Activated naive CD4-positive, alpha-beta T cell treated with anti-CD3 and anti-CD28 coated beads, Interleukin-2, amount 10 ng/mL, durations not matched to agents 7 days and 5 days (primary cell): ENCODE measurements at regions of chr1 and their contacts with region 1.

Region 1: DNA sequence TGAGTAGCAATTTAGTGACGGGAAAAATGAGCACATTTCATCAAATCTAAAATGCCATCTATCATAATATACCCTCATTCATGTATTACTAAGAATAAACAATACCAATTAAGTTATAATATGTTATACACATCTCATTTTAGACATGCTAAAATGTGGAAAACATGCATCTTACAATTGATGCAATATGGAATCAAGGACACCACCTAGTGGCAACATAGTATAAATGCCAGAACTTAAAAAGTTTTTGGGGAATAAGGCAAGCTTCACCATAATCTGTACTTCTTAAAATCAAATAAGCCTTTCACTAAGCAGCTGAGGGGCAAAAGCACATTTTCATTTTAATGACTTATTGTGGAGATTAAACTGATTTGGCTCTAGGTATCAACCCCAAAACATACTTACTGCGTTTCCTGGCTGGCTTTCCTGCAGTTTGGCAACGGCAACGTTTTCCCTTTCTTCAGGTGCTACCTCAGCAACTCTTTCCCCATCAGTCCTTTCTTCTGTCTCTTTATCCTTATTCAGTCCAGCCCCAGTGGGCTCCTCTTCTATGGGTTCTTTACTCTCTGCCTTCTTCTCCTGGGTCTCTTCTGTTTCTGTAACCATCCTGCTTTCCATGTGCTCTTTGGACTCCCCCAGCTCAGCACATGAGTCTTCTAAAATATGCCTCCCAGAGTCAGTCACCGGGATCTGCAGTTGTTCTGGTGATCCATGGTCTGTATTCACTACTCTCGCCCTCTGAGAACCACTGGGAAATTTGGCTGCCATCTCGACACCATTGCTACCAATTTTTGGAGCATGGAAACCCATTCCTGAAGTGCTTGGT is 11.4 kb downstream of the SDE2 start:
- DNase-seq: no peak
- H3K4me3 Mint-ChIP-seq: no peak overlapping the region
- H3K27ac Mint-ChIP-seq: no peak overlapping the region
- H3K4me1 Mint-ChIP-seq: peaks cover 22% of the 10 kb centered on the region
- H3K27me3 Mint-ChIP-seq: no peaks in the 10 kb centered on the region

Region 2: GRCh38 chr1:225845571-225846259 is 142.0 kb before region 1 on chr1:
- CTCF ChIA-PET with region 1: no interaction called
- DNase-seq: peak; percentile 60
- H3K4me3 Mint-ChIP-seq: no peak overlapping the region
- H3K27ac Mint-ChIP-seq: peak overlapping the region; percentile 14
- H3K4me1 Mint-ChIP-seq: peaks cover 34% of the 10 kb centered on the region
- H3K27me3 Mint-ChIP-seq: no peaks in the 10 kb centered on the region

Region 3: GRCh38 chr1:225962440-225962975 is 25.2 kb before region 1 on chr1:
- CTCF ChIA-PET with region 1: interaction called, 15 read pairs
- DNase-seq: peak; percentile 70
- H3K4me3 Mint-ChIP-seq: no peak overlapping the region
- H3K27ac Mint-ChIP-seq: no peak overlapping the region
- H3K4me1 Mint-ChIP-seq: peaks cover 2% of the 10 kb centered on the region
- H3K27me3 Mint-ChIP-seq: peaks cover 31% of the 10 kb centered on the region